ENCODE measurements at regions of chr1 and their contacts with region 1.

Region 1: DNA sequence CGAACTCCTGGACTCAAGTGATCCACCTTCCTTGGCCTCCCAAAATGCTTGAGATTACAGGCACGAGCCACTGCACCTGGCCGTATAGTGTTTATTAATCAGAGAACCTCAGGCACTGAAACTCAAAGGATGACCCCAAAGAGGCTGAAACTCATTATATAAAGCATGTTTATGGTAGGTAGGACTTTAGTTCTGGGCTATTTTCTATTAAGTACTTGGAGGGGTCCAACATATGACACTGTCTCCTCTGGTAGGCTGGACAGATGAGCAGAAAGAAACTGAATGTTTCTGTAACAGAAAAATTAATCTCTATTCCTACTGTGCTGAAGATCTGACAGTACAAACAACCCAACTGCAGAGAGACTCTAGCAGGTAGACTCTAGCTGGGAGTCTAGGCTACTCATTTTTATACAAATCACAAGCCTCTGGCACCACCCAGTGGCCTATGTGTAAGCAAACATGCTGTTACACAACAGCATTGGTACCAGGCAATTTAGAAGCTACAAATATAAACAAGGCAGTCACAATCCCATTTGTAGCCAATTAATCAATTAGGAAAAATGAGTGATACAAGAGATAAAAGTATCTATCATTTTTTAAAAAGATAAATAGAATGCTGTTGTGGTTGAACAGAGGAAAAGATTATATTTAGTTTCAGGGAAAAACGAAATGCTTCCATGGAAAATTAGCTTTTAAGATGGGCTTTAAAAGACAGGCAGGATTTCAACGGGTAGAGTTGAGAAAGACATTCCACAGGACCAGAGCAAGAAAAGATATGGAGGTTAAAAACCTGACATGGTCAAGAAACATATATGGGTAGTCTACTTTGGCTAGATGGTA is 10.4 kb downstream of the DCAF8 start:
- DNase-seq: peak; percentile 82

Region 2: DNA sequence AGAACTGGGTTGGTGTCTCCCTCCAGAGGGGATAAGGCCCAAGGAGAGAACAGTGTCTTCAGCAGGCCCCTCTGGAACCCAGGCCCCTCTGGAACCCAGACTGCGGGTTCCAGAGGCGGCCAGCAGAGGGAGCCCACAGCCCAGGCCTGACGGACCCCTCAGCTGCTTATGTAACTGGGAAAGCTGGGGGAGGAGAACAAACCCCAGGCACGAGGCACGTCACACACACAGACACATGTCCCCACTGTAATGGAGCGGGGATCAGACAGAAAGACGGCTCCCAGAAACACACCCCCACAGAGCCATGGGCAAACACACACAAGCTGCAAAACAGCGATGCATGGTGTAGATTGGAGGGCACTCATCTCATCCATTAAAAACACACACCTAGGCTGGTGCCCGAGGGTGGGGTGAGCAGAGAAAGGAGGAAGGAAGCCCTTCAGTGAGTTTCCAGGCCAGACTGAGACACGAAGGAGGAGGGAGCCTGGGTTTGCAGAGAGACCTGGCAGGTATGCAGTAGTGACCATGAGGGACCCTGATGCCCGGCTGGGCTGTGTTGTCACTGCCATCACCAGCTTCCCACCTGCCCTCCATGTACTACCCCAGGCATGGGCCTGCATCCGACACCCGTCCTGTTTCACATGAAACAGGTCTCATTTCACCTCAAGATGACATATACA is 150.7 kb before region 1 on chr1:
- in situ Hi-C with region 1: loop called (anchors 10 kb)
- DNase-seq: peak; percentile 75

Region 3: DNA sequence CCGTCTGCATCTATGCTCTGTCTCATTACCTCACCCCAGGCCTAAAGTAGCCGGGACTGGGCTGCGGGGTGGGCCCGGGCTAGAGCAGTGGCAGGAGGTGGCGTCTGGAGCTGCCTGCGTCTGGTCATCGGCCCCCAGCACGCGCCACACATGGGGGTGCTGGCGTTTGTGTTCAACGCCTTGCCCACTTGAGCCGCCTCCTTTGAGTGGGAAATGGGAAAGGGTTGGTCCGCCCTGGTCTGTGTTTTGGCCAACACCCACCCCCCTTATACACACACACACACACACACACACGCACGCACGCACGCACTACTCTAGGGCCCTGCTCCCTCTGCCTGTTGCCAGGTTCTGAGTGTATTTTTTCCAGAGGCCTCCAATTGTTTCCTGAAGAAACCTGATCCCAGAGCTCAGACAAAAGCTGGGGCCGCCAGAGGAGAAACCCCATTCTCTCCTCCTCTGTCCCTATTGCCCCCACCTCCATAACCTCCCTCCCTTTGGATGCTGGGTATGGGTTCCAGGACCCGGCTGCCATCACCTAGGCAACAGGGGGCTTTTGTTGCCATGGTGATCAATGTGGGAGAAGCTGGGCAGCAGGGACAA is 158.6 kb after region 1 on chr1:
- in situ Hi-C with region 1: no loop called
- DNase-seq: no peak

Region 4: DNA sequence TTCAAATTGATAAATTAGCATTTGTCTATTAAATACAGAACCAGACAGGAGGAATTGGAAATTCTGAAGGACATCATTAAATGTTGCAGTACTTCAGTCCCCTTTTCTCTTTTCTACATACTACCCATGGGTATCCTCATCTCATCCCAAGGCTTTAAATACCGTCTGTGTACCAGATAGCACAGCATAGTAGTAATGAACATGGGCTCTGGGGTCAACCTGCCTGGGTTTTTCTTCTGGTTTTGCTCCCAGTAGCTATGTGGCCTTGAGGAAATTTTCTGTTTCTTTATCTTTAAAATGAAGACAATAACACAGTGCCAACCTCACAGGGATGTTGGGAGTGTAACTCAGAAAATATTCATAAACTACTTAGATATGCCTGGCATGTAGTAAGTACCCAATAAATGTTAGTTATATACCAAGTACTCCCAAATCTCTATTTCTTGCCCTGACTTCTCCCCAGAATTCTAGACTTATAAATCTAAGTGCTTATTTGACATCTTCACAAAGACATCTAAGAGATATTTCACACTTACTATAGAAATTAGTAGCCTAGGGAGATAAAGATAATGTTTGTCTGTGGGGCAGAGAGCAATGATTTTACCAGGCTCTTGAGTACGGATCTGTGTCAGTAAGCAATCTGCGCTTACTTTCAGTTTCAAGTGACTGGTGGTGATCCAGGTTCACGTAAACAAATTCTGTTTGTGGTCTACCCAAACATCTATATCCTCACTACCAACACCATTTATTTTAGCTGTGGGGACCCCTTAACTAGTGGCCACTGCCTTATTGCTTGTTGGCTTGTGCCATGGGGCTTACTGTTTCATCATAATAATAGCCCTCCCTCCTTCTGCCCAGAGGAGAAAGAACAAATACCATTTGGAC is 185.8 kb after region 1 on chr1:
- in situ Hi-C with region 1: no loop called
- DNase-seq: peak; percentile 25

Measured in SK-MEL-5 (cell line).